IMR-90 (cell line): ENCODE measurements at regions of chr4 and their contacts with region 1.

Region 1: GRCh38 chr4:56871371-56871866 is 36.3 kb upstream of the REST start:
- DNase-seq: no peak
- ATAC-seq: peak; percentile 66
- H3K4me3 ChIP-seq: no peak overlapping the region
- H3K27ac ChIP-seq: no peak overlapping the region
- H3K4me1 ChIP-seq: peaks cover 3% of the 10 kb centered on the region; the same call in 1 of the 2 replicates
- H3K27me3 ChIP-seq: peaks cover 1% of the 10 kb centered on the region; the same call in 1 of the 2 replicates
- CTCF ChIP-seq: no peak
- POLR2A ChIP-seq: no peak
- RAD21 ChIP-seq: no peak

Region 2: DNA sequence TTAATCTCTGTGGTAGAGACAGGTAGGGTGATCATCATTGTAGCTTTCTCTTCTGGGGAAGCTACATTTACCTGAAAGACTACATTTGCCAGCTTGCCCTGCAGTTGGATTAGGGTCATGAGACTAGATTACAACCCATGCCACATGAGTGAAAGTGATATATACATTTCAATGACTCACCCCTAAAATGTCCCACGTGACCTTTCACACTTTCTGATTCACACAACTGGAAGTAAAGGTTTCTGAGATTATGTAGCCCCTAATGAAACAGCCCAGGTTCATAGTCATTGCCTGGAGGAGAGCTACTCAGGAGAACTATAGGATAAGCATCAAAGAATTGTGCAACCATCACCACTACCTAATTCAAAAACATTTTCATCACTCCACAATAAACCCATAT is 1297.2 kb before region 1 on chr4:
- CTCF ChIA-PET with region 1: no interaction called
- POLR2A ChIA-PET with region 1: no interaction called
- dilution Hi-C with region 1: no loop called
- in situ Hi-C with region 1: no loop called
- intact Hi-C with region 1: no loop called
- DNase-seq: no peak
- ATAC-seq: no peak
- H3K4me3 ChIP-seq: no peak overlapping the region
- H3K27ac ChIP-seq: no peak overlapping the region
- H3K4me1 ChIP-seq: no peaks in the 10 kb centered on the region
- H3K27me3 ChIP-seq: no peaks in the 10 kb centered on the region; the same call in 1 of the 2 replicates
- CTCF ChIP-seq: no peak
- POLR2A ChIP-seq: no peak
- RAD21 ChIP-seq: no peak

Region 3: DNA sequence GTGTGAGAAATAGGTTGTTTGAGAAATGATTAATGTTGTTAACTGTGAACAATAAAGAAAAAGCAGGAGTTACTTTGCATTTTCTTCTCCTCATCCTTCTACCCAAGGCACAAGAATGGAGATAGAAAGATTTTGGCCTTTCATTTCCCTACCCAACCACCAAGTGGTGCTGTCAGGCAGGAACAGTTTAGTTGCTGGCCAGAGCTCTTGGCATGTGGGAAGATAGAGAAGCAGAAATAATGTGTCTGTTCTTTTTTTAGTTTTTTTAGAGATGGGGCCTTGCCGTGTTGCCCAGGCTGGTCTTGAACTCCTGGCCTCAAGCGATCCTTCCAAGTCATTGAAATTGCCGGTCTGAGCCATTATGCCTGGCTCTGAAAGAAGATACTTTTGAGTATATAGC is 203.1 kb before region 1 on chr4:
- CTCF ChIA-PET with region 1: no interaction called
- POLR2A ChIA-PET with region 1: no interaction called
- dilution Hi-C with region 1: no loop called
- in situ Hi-C with region 1: no loop called
- intact Hi-C with region 1: no loop called
- DNase-seq: no peak
- ATAC-seq: no peak
- H3K4me3 ChIP-seq: no peak overlapping the region
- H3K27ac ChIP-seq: no peak overlapping the region
- H3K4me1 ChIP-seq: no peaks in the 10 kb centered on the region
- H3K27me3 ChIP-seq: peaks cover 6% of the 10 kb centered on the region
- CTCF ChIP-seq: peak; percentile 29
- POLR2A ChIP-seq: no peak
- RAD21 ChIP-seq: peak; percentile 41

Region 4: DNA sequence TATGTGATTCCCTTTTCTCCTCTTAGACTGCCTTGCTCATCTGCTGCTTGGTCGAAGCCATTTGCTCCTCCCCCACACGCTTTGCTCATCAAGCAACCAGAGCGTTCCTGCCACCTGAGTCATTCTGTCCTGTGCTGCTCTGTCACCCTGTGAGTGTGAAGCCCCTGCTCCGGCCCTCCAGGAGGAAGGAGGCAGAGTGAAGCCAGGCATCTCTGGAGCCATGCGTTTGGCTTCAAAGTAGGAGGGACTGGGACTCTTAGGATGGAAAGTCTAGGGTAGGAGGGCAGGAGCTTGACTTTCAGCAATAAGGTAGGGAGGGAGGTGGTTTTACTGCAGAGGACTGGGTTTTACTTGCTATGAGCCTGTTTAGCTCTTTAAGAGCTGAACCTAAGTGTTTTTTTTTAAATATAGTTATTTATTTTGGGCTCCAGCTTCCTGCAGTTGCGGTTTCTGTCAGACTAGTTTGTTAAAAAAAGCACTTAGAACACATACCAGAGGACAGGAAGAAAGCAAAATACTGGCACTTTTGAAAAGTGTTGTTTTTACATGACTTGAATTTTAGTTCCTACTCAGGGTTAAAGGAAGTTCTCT is 113.5 kb before region 1 on chr4:
- CTCF ChIA-PET with region 1: no interaction called
- POLR2A ChIA-PET with region 1: no interaction called
- dilution Hi-C with region 1: no loop called
- in situ Hi-C with region 1: loop called (anchors 25 kb)
- intact Hi-C with region 1: no loop called
- DNase-seq: peak; percentile 94
- ATAC-seq: peak; percentile 91
- H3K4me3 ChIP-seq: peak overlapping the region; percentile 11; the same call in 1 of the 2 replicates
- H3K27ac ChIP-seq: peak overlapping the region; percentile 62
- H3K4me1 ChIP-seq: peaks cover 11% of the 10 kb centered on the region
- H3K27me3 ChIP-seq: 0 out of 2 replicates have a peak, but pooled peaks cover under 1% of the 10 kb centered on the region
- CTCF ChIP-seq: no peak
- POLR2A ChIP-seq: no peak
- RAD21 ChIP-seq: no peak

Region 5: DNA sequence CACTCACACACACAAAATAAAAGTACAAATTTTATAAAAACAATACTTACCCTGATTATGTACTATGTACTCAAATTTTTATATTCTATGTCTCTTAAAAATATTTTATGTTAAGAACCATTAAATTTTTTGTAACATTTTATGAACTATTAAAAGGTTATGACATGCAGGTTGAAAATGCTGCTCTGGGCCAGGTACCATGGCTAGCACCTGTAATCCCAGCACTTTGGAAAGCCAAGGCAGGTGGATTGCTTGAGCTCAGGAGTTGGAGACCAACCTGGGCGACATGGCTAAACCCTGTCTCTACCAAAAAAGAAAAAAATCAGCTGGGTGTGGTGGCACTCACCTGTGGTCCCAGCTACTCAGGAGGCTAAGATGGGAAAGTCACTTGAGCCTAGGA is 20.5 kb before region 1 on chr4:
- CTCF ChIA-PET with region 1: interaction called, 3 read pairs
- POLR2A ChIA-PET with region 1: no interaction called
- dilution Hi-C with region 1: no loop called
- in situ Hi-C with region 1: no loop called
- intact Hi-C with region 1: loop called (anchors 2 kb)
- DNase-seq: no peak
- ATAC-seq: no peak
- H3K4me3 ChIP-seq: no peak overlapping the region
- H3K27ac ChIP-seq: no peak overlapping the region
- H3K4me1 ChIP-seq: no peaks in the 10 kb centered on the region
- H3K27me3 ChIP-seq: no peaks in the 10 kb centered on the region; the same call in 1 of the 2 replicates
- CTCF ChIP-seq: no peak
- POLR2A ChIP-seq: no peak
- RAD21 ChIP-seq: no peak

Region 6: DNA sequence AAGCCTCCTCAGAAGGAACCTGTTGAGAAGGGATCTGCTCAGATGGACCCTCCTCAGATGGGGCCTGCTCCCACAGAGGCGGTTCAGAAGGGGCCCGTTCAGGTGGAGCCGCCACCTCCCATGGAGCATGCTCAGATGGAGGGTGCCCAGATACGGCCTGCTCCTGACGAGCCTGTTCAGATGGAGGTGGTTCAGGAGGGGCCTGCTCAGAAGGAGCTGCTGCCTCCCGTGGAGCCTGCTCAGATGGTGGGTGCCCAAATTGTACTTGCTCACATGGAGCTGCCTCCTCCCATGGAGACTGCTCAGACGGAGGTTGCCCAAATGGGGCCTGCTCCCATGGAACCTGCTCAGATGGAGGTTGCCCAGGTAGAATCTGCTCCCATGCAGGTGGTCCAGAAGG is 59.2 kb after region 1 on chr4:
- CTCF ChIA-PET with region 1: no interaction called
- POLR2A ChIA-PET with region 1: no interaction called
- dilution Hi-C with region 1: no loop called
- in situ Hi-C with region 1: no loop called
- intact Hi-C with region 1: no loop called
- DNase-seq: no peak
- ATAC-seq: no peak
- H3K4me3 ChIP-seq: no peak overlapping the region
- H3K27ac ChIP-seq: no peak overlapping the region
- H3K4me1 ChIP-seq: no peaks in the 10 kb centered on the region
- H3K27me3 ChIP-seq: no peaks in the 10 kb centered on the region
- CTCF ChIP-seq: no peak
- POLR2A ChIP-seq: no peak
- RAD21 ChIP-seq: no peak

Region 7: GRCh38 chr4:57020467-57021101 is 149.2 kb after region 1 on chr4:
- CTCF ChIA-PET with region 1: no interaction called
- POLR2A ChIA-PET with region 1: no interaction called
- dilution Hi-C with region 1: no loop called
- in situ Hi-C with region 1: no loop called
- intact Hi-C with region 1: no loop called
- DNase-seq: peak; percentile 94
- ATAC-seq: peak; percentile 69
- H3K4me3 ChIP-seq: no peak overlapping the region
- H3K27ac ChIP-seq: no peak overlapping the region
- H3K4me1 ChIP-seq: peaks cover 8% of the 10 kb centered on the region
- H3K27me3 ChIP-seq: no peaks in the 10 kb centered on the region
- CTCF ChIP-seq: no peak
- POLR2A ChIP-seq: no peak
- RAD21 ChIP-seq: no peak